Dendritic cell treated with granulocyte-macrophage colony-stimulating factor and Interleukin-4, amounts not matched to agents 40 ng/mL and 50 ng/mL, for 4 days (primary cell): ENCODE measurements at regions of chr18 and their contacts with region 1.

Region 1: GRCh38 chr18:35998967-35999366 is 26.5 kb downstream of the RMP24 start:
- H3K4me3 Mint-ChIP-seq: no peak overlapping the region
- H3K27ac Mint-ChIP-seq: no peak overlapping the region
- H3K4me1 Mint-ChIP-seq: no peaks in the 10 kb centered on the region
- H3K27me3 Mint-ChIP-seq: no peaks in the 10 kb centered on the region

Region 2: DNA sequence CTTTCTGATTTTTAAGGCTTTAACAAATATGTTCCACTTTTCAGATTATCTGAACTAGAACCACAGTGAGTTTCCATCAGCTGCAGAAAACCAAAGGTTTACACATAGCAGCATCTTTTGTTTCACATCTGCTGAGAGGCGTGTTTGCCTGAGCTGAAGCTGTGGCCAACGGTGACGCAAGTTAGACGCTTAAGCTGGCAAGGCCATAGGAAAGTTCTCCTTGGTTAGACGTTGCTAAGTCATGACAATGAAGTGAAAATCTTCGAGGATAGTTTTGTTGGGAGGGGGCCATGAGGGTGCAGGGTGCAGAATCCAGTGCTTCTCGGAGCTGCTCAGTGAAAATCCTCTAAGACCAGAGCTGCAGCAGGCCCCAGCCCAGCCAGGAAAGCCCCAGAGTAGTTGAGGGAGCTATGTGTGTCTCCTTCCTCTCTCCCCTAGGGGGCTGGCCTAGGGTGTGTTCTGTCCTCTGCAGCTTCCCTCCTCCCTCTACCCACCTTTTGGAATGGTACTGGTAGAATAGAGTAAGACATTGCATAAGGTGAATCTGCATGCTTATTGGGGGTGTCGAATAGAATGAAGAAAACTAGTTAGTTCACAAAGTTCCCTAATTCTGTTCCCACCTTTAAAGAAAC is 403.9 kb after region 1 on chr18:
- intact Hi-C with region 1: loop called (anchors 10 kb)
- H3K4me3 Mint-ChIP-seq: no peak overlapping the region
- H3K27ac Mint-ChIP-seq: no peak overlapping the region
- H3K4me1 Mint-ChIP-seq: no peaks in the 10 kb centered on the region
- H3K27me3 Mint-ChIP-seq: peaks cover 1% of the 10 kb centered on the region